ENCODE measurements at regions of chr13 and their contacts with region 1.

Region 1: DNA sequence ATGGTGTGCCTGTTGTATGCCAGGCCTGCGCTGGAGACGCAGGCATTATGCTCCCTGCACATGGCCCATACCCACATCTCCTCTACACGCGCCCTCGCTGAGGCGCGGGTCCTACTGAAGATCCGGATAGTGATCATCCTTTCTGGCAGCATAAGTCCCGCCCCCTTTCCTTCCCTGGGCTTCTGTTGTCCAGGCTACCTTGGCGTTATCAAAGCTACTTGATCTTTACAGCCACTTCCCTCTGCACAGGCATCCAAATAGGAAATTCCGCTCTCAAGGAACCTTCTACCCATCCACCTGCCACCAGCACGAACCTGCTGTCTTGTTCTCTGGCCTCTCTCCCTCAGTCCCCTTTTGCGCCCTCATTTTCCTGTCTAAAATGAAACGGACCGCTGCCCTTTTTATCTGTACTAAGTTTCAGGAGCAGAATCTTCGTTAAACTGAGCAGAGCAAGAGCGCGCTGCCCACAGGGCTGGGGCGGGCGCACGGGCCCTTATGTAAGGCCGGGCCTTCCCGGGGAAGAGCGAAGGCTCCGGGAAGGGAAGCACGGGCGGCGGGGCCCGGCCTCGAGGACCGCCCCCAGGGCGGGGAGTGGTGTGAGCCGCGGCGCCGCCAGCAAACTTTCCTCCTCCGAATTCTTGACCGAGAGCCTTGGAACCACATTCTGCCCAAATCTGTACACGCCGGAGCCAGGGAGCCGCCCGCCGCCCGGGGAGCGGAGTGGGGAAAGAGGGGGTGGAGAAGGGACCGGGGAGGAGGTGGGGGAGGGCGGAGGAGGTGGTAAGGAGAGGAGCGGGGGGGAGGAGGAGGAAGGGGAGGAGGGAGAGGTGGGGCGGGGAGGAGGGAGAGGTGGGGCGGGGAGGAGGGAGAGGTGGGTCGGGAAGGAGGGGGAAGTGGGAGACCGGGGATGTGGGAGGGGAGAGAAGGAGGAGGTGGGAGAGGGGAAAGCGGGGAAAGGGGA is 920 bp upstream of the UBE2L5 start:
- DNase-seq: peak; percentile 67
- CTCF ChIP-seq: no peak

Region 2: DNA sequence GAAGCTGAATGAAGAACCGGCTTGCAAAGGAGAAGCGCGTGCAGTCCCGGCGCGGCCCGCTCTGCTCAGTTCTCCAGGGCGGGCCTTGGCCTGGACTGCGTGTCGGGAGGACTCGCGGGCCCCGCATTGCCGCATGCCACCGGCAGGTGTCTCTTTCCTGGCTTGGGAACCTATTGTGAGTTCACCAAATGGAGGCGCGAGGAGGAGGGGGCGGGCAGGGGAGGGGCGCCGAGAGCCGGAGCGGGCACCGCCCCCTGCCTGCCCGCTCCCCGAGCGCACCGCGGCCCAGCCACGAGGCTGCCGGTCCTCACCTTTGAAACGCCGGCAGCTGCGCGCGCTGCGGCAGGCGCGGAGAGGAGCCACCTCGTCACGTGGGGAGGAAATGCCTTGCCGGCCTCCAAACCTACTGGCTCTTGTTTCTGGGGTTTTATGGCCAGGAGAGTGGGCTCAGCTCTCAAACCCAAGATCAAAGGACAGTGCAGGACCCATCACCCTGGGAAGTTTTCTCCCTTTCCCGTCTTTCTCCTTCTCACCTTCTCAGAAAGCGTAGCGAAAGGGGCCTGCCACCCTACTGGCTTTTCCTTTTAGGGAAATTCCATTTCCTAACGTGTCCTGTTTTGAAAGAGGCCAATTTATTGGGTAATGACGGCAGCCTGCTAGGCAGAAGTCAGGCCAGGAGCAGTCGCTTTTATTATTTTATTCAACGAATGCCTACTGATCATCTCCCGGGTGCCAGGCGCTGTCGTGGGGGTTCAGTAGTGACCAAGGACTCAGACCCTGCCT is 12.9 kb before region 1 on chr13:
- CTCF ChIA-PET with region 1: interaction called, 25 read pairs
- POLR2A ChIA-PET with region 1: no interaction called
- DNase-seq: peak; percentile 92
- CTCF ChIP-seq: peak; percentile 82

Measured in GM10248 (cell line).